Mammary epithelial cell (primary cell): ENCODE measurements at regions of chr1 and their contacts with region 1.

Region 1: DNA sequence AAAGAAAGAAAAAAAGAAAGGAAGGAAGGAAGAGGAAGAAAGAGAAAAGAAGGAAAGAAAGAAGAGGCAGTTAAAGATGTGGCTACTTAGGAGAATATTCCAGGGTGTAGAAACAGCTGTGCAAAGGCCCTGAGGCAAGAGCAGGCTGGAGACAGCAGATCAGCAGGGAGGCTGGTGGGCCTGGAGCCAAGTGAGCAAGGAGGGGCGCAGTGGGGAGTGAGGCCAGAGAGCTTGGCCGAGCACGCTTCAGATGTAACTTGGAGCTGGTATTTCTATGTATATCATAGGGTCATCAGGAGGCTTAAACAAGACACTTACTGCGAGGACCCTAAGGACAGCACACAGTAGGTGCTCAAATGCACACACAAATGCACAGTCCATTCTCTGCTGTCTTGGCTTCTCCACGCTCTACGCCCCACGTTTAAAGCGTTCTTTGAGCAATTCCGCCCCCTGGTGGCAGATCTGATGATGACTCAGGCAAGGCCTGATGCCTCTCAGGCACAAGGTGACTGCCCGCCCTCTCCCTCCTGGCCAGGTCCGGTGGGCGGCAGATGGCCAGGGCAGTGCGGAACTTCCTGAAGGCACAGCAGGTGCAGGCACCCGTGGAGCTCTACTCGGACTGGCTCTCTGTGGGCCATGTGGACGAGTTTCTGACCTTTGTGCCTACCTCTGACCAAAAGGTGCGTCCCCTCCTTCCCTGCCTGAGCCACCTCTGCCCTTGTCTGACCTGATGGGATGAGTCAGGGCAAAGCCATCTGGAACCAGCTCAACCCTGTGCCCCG is 11.9 kb upstream of the PADI3 start:
- DNase-seq: peak; percentile 83
- H3K4me3 ChIP-seq: no peak overlapping the region
- H3K27ac ChIP-seq: no peak overlapping the region
- H3K4me1 ChIP-seq: peaks cover 37% of the 10 kb centered on the region
- H3K27me3 ChIP-seq: no peaks in the 10 kb centered on the region
- CTCF ChIP-seq: peak; percentile 78 to 79

Region 2: DNA sequence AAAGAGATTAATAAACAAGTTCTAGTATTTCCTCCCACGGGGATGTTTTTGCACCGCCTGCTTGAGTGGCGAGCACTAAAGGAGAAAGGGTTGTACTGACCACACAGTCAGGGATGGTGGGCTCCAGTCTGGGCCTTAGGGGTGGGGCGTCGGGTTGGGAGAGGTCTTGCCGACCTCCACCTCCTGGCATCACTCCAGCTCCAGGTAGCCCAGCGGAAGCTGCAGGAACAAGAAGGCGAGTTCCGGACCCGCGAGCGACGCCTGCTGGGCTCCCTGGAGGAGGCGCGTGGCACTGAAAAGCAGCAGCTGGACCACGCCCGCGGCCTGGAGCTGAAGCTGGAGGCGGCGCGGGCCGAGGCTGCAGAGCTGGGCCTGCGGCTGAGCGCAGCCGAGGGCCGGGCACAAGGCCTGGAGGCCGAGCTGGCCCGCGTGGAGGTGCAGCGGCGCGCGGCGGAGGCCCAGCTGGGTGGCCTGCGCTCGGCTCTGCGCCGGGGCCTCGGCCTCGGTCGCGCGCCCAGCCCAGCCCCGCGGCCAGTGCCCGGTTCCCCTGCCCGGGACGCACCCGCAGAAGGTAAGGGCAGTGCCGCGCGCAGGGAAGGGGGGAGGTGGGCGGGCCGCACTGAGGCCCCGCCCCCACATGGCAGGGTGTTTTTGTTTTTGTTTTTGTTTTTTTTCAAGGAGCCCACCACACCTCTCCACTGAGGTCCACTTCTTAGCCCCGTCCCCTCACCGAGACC is 276.2 kb before region 1 on chr1:
- CTCF ChIA-PET with region 1: no interaction called
- dilution Hi-C with region 1: no loop called
- in situ Hi-C with region 1: no loop called
- intact Hi-C with region 1: loop called (anchors 2 kb)
- DNase-seq: no peak
- H3K4me3 ChIP-seq: no peak overlapping the region
- H3K27ac ChIP-seq: no peak overlapping the region
- H3K4me1 ChIP-seq: no peaks in the 10 kb centered on the region
- H3K27me3 ChIP-seq: no peaks in the 10 kb centered on the region
- CTCF ChIP-seq: no peak

Region 3: GRCh38 chr1:17059739-17060460 is 177.1 kb before region 1 on chr1:
- CTCF ChIA-PET with region 1: no interaction called
- dilution Hi-C with region 1: no loop called
- in situ Hi-C with region 1: loop called in 1 of 2 experiments (anchors 5 kb)
- intact Hi-C with region 1: loop called (anchors 1 kb)
- DNase-seq: peak; percentile 60
- H3K4me3 ChIP-seq: no peak overlapping the region
- H3K27ac ChIP-seq: no peak overlapping the region
- H3K4me1 ChIP-seq: peaks cover 8% of the 10 kb centered on the region
- H3K27me3 ChIP-seq: no peaks in the 10 kb centered on the region
- CTCF ChIP-seq: peak; percentile 76 to 85

Region 4: DNA sequence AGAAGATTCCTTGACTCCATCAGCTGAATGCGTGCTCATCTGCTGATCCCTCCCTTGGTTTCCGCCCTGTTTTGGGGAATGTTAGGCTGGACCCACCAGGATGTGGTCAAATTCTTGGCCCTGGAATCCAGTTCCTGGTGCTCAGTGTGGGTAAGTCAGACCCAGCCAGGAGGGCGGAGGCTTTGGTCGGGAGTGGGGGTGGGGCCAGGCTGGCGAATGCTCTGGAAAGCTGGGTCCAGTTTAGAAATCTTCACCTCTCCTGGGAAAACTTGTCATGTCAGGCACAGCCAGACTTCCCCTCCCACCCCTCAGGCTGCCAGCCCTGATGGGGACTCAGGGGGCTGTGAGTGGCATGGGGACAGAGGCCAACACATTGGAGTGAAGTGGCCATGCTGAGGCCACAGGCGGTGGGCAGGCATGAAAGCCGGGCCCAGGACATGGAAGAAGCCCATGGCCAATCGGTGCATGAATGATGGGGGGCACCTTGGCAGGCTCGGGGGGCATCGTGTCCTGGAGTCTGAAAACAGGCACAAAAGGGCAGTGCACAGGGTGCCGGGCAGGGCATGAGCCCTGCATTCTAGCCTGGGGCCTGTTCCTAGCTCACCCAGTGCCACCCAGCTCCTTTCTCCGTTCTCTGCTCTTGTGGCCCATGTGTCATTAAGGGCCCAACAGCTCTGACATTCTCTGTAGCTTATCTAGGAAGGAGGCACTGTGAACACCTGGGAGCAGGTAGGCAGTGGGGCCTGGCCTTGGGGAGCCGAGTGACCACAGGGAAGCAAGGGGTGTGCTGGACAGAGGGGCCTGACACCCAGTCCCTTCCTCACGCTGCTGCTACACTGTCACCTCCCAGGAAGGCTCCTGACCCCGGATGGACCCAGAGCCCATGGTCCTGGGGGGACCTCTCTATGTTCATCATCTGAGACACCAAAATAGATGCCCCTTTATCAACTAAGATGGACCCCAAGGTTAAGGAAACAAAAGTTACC is 46.7 kb before region 1 on chr1:
- CTCF ChIA-PET with region 1: no interaction called
- dilution Hi-C with region 1: no loop called
- in situ Hi-C with region 1: no loop called
- intact Hi-C with region 1: loop called (anchors 2 kb)
- DNase-seq: peak; percentile 92
- H3K4me3 ChIP-seq: no peak overlapping the region
- H3K27ac ChIP-seq: peak overlapping the region; percentile 64
- H3K4me1 ChIP-seq: peaks cover 61% of the 10 kb centered on the region
- H3K27me3 ChIP-seq: no peaks in the 10 kb centered on the region
- CTCF ChIP-seq: no peak

Region 5: GRCh38 chr1:17274186-17275170 is 37.5 kb after region 1 on chr1:
- CTCF ChIA-PET with region 1: no interaction called
- dilution Hi-C with region 1: no loop called
- in situ Hi-C with region 1: no loop called
- intact Hi-C with region 1: loop called (anchors 1 kb)
- DNase-seq: peak; percentile 39
- H3K4me3 ChIP-seq: no peak overlapping the region
- H3K27ac ChIP-seq: no peak overlapping the region
- H3K4me1 ChIP-seq: peaks cover 10% of the 10 kb centered on the region
- H3K27me3 ChIP-seq: no peaks in the 10 kb centered on the region
- CTCF ChIP-seq: peak; percentile 63 to 77

Region 6: DNA sequence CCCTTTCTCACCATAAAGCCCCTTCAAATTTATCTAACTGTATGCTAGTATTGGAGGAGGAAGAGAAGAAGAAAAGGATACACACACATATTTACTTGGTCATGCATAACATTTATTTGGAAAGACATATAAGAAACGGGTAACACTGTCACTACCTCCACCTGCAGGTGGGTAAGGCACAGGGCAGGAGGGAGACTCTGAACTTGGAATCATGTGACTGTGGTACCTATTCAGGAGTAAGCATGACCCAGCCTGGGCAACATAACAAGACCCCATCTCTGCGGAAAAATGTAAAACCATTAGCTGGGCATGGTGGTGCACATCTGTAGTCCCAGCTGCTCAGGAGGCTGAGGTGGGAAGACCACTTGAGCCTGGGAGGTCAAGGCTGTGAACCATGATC is 133.6 kb after region 1 on chr1:
- CTCF ChIA-PET with region 1: no interaction called
- dilution Hi-C with region 1: no loop called
- in situ Hi-C with region 1: no loop called
- intact Hi-C with region 1: loop called (anchors 1 kb)
- DNase-seq: peak; percentile 32
- H3K4me3 ChIP-seq: no peak overlapping the region
- H3K27ac ChIP-seq: no peak overlapping the region
- H3K4me1 ChIP-seq: peaks cover 32% of the 10 kb centered on the region
- H3K27me3 ChIP-seq: no peaks in the 10 kb centered on the region
- CTCF ChIP-seq: peak; percentile 72